Mammary epithelial cell (primary cell): ENCODE measurements at regions of chr12 and their contacts with region 1.

Region 1: GRCh38 chr12:99147130-99147529 is 500.4 kb upstream of the GARIN6 start:
- DNase-seq: no peak
- H3K4me3 ChIP-seq: no peak overlapping the region
- H3K27ac ChIP-seq: no peak overlapping the region
- H3K4me1 ChIP-seq: no peaks in the 10 kb centered on the region
- H3K27me3 ChIP-seq: no peaks in the 10 kb centered on the region
- CTCF ChIP-seq: no peak

Region 2: GRCh38 chr12:98679611-98680005 is 467.5 kb before region 1 on chr12:
- CTCF ChIA-PET with region 1: no interaction called
- dilution Hi-C with region 1: no loop called
- in situ Hi-C with region 1: no loop called
- intact Hi-C with region 1: loop called (anchors 5 kb)
- DNase-seq: no peak
- H3K4me3 ChIP-seq: no peak overlapping the region
- H3K27ac ChIP-seq: no peak overlapping the region
- H3K4me1 ChIP-seq: no peaks in the 10 kb centered on the region
- H3K27me3 ChIP-seq: no peaks in the 10 kb centered on the region
- CTCF ChIP-seq: no peak